ENCODE measurements at regions of chr9 and their contacts with region 1.

Region 1: GRCh38 chr9:93566408-93567270 is 9.7 kb upstream of the PHF2 start:
- DNase-seq: peak; percentile 99
- H3K4me3 ChIP-seq: peak overlapping the region; percentile 21 to 56 (median 44)
- H3K27ac ChIP-seq: peak overlapping the region; percentile 91 to 95 (median 94)
- H3K4me1 ChIP-seq: peaks cover 4 to 13% (median 8%) of the 10 kb centered on the region in 4 donors
- H3K27me3 ChIP-seq: no peaks in the 10 kb centered on the region
- CTCF ChIP-seq: peak; percentile 90 to 96 (median 94)
- EP300 ChIP-seq: no peak
- POLR2A ChIP-seq: peak; percentile 93

Region 2: GRCh38 chr9:92535940-92536850 is 1030.4 kb before region 1 on chr9 and contains the start of gene ECM2:
- in situ Hi-C with region 1: no loop called
- intact Hi-C with region 1: no loop called
- DNase-seq: no peak
- H3K4me3 ChIP-seq: no peak within 1 kb of the TSS
- H3K27ac ChIP-seq: peak within 1 kb of the TSS in 3 of 4 donors; percentile 25 to 40 (median 33)
- H3K4me1 ChIP-seq: no peaks in the 10 kb centered on the region
- H3K27me3 ChIP-seq: no peaks in the 10 kb centered on the region
- CTCF ChIP-seq: no peak
- EP300 ChIP-seq: no peak
- POLR2A ChIP-seq: no peak
- total RNA-seq, gene ECM2: 0.37 to 7.2 (median 3.1) TPM

Region 3: GRCh38 chr9:93431583-93431991 is 135.1 kb before region 1 on chr9:
- in situ Hi-C with region 1: no loop called
- intact Hi-C with region 1: no loop called
- DNase-seq: no peak
- H3K4me3 ChIP-seq: no peak overlapping the region
- H3K27ac ChIP-seq: no peak overlapping the region
- H3K4me1 ChIP-seq: no peaks in the 10 kb centered on the region
- H3K27me3 ChIP-seq: no peaks in the 10 kb centered on the region
- CTCF ChIP-seq: no peak
- EP300 ChIP-seq: no peak
- POLR2A ChIP-seq: no peak

Region 4: DNA sequence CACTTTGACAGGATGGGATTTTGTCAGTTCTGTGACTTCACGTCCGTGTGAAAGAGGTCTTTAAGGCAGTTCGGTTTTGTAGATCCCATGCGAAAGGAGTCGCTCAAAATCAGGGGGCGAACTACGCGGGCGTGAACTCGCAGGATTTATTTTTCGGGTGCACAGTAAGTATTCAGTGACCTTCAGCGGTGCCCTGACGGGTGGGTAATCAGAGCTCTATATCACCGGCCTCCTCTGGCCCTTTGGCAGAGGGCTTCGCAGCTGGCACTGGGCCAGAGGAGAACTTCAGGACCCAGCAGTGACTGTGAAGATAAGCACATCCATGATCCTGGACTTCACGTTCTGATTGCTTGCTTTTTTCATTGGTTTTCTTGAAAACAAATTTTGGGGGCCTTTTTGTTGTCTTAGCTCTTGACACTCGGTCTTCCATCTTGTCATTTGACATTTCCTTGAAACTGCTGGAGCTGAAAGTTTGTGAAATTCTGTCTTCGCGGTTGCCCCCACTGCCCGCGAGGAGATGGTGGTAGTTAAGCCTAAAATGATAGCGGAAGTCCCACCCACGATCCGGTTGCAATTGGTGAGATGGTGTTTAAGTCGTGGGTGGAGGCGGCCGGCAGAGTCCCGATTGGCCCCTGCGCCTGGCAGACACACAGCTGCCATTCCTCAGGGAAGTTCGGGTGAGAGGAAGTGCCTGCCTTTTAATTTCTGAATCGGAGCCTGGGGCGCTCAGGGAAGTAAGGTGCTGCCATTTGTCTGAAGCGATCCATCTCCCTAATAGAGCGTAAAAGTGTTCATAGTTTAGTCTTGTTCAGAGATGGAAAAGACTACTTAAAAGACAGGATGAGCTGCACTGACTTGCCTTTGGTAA is 113.4 kb before region 1 on chr9 and contains the start of gene FAM120AOS:
- in situ Hi-C with region 1: loop called in 1 of 4 experiments (anchors 10 kb)
- intact Hi-C with region 1: loop called (anchors 5 kb)
- DNase-seq: peak; percentile 95
- H3K4me3 ChIP-seq: peak within 1 kb of the TSS; percentile 62 to 85 (median 76)
- H3K27ac ChIP-seq: peak within 1 kb of the TSS; percentile 96 to 99 (median 98)
- H3K4me1 ChIP-seq: peaks cover 42 to 65% (median 55%) of the 10 kb centered on the region in 4 donors
- H3K27me3 ChIP-seq: no peaks in the 10 kb centered on the region
- CTCF ChIP-seq: peak in 1 of 5 experiments; percentile 7
- EP300 ChIP-seq: no peak
- POLR2A ChIP-seq: peak; percentile 93
- total RNA-seq, gene FAM120AOS: 68.9 to 108 (median 86.4) TPM

Measured in transverse colon (tissue), 4 donors.